GM18951 (cell line): ENCODE measurements at regions of chr17 and their contacts with region 1.

Region 1: GRCh38 chr17:20116683-20117309 is 107.6 kb downstream of the SPECC1 start:
- POLR2A ChIP-seq: no peak

Region 2: GRCh38 chr17:19940722-19941464 is 175.9 kb before region 1 on chr17:
- in situ Hi-C with region 1: no loop called
- POLR2A ChIP-seq: no peak

Region 3: GRCh38 chr17:20009302-20010098 is 107.3 kb before region 1 on chr17 and contains the start of gene SPECC1:
- in situ Hi-C with region 1: no loop called
- POLR2A ChIP-seq: no peak

Region 4: DNA sequence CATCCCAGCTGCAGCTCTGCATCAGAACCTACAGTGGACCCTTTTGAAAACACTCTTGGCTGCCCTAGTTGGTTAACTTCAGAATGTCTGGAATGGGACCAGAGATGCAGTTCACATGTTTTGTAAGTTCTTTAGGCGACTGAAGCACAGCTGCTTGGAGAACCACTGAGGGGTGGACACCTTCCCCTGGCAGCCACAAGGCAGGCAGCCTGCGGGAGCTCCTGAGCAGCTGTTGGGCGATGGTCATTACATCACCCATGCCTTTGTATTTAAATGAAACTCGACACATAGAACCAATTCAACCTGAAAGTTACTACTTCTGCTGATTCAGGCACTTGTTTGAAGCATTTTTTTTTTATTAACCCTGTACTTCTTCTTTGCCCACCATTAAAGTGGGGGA is 199.0 kb after region 1 on chr17:
- in situ Hi-C with region 1: loop called (anchors 10 kb)
- POLR2A ChIP-seq: no peak